ENCODE measurements at regions of chr1 and their contacts with region 1.

Region 1: GRCh38 chr1:206606856-206607255 is 5.4 kb downstream of the EIF2D start:
- DNase-seq: peak; percentile 67
- H3K4me3 Mint-ChIP-seq: no peak overlapping the region
- H3K27ac Mint-ChIP-seq: no peak overlapping the region
- H3K4me1 Mint-ChIP-seq: peaks cover 19% of the 10 kb centered on the region
- H3K27me3 Mint-ChIP-seq: no peaks in the 10 kb centered on the region
- CTCF ChIP-seq: peak; percentile 74

Region 2: DNA sequence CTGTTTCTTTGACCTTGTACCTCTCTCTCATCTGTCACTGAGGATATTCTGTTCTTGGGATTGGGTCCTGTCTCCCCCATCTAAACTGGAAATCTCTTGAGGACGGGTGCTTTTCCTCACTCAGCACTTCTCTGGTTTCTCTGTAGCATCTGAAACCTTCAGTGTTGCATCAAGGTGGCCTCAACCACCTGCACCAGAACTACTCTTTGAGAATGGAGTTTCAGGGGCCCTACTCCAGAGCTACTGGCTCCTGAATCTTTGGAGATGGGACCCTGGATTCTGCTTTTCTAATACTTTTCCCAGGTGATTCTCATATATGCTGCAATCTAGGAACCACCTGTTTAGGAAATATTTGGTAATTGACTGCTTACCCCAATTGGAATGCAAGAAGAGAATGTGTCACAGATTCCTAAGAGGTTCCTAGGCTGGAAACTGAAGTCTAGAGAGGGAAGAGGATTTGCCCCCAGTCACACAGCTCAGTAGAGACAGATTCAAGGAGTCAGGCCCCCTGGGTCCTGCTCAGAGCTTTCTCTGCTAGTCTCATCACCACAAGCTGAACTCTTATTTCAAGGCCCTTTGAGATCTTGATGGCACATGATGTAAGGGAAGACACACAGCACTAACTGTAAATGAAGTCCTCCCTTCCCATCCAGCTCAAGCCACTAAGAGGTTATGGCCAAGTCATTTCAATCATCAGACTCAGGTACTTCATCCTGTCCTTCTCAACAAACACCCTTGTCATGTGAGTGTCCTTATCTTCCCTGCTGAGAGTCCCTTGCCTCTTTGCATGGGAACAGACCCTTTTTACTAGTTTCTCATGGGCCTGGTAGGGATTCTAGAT is 43.3 kb before region 1 on chr1:
- CTCF ChIA-PET with region 1: no interaction called
- POLR2A ChIA-PET with region 1: no interaction called
- intact Hi-C with region 1: no loop called
- DNase-seq: no peak
- H3K4me3 Mint-ChIP-seq: no peak overlapping the region
- H3K27ac Mint-ChIP-seq: no peak overlapping the region
- H3K4me1 Mint-ChIP-seq: no peaks in the 10 kb centered on the region
- H3K27me3 Mint-ChIP-seq: no peaks in the 10 kb centered on the region
- CTCF ChIP-seq: no peak

Region 3: DNA sequence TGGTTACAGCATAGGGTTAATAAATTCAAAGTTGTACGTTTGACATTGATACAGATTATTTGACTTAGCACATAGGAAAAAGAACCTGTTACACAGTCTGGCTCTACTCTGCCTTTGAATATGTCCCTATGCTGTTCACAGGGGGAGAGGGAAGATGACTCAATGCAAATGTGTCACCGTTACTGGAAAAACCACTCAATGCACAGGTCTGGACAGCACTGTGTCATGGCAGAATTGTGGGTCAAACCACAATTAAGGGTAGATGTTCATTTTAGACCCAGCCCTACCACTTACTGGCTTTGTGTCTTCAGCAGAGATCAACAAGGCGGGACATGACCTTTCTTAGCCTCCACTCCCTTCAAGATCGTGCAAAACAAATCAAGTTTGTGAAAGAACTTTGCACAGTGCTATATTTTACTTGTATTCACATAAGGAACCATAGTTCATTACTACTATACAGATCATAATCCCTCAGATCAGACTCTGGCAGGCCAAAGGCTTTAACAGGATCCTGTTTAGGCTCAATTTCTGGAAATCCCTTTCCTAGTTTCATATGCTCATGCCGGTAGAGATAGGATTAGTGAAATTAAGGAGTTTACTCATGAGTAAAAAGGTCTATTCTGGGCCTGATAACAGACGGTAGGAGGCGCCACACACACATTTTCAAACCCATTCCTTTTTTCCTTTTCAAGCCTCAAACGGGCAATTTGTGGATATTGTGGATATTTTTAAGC is 16.7 kb before region 1 on chr1:
- CTCF ChIA-PET with region 1: interaction called, 20 read pairs
- POLR2A ChIA-PET with region 1: interaction called, 6 read pairs
- intact Hi-C with region 1: no loop called
- DNase-seq: peak; percentile 95
- H3K4me3 Mint-ChIP-seq: no peak overlapping the region
- H3K27ac Mint-ChIP-seq: peak overlapping the region; percentile 66
- H3K4me1 Mint-ChIP-seq: peaks cover 28% of the 10 kb centered on the region
- H3K27me3 Mint-ChIP-seq: no peaks in the 10 kb centered on the region
- CTCF ChIP-seq: peak; percentile 41

Region 4: DNA sequence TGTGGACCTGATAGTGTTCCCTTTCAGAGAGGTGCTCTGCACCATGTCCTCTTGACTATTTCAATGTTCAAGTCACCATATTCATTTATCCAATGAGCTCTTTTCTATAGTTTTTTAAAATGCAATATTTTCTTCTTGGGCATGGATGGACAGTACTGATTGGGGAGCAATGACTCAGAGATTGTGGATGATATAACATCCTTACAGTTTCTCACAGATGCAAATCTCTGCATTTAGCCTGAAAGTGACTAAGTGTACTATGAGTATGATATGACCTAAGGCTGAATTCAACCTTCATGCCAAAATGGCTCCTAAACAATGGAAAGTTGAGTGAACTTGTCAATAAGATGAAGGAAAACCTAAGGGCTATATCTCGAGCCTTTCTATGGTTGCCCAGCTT is 533.7 kb after region 1 on chr1:
- CTCF ChIA-PET with region 1: no interaction called
- POLR2A ChIA-PET with region 1: no interaction called
- intact Hi-C with region 1: no loop called
- DNase-seq: peak; percentile 35
- H3K4me3 Mint-ChIP-seq: no peak overlapping the region
- H3K27ac Mint-ChIP-seq: no peak overlapping the region
- H3K4me1 Mint-ChIP-seq: peaks cover 5% of the 10 kb centered on the region
- H3K27me3 Mint-ChIP-seq: no peaks in the 10 kb centered on the region
- CTCF ChIP-seq: no peak

Measured in MCF 10A (cell line).